ENCODE measurements at regions of chr3 and their contacts with region 1.

Region 1: DNA sequence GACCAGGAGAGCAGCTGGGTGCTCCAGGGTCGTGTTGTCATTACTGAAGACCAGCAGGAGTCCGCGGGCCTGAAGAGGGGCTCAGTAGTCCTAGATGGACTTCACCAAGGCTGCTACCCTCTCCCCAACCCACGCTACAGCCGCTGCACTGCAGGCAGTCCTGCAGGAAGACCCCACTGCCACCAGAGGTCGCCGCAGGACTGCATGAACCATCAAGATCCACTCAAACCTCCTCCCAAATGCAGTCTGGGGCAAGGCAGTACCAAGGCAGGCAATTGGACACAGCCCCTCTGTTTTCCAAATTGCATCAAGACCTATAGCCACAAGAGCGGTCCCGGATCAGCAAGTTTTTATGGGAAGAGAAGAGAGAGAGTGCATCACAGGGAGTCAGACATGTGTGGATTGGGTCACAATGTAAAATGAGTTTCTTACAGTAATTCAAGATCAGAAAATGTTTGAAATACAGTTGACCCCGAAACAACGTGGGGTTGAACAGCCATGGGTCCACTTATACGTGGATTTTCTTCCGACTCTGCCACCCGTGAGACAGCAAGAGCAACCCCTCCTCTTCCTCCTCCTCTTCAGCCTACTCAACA is 46.7 kb downstream of the DZIP1L start:
- DNase-seq: peak; percentile 86
- CTCF ChIP-seq: peak; percentile 98

Region 2: DNA sequence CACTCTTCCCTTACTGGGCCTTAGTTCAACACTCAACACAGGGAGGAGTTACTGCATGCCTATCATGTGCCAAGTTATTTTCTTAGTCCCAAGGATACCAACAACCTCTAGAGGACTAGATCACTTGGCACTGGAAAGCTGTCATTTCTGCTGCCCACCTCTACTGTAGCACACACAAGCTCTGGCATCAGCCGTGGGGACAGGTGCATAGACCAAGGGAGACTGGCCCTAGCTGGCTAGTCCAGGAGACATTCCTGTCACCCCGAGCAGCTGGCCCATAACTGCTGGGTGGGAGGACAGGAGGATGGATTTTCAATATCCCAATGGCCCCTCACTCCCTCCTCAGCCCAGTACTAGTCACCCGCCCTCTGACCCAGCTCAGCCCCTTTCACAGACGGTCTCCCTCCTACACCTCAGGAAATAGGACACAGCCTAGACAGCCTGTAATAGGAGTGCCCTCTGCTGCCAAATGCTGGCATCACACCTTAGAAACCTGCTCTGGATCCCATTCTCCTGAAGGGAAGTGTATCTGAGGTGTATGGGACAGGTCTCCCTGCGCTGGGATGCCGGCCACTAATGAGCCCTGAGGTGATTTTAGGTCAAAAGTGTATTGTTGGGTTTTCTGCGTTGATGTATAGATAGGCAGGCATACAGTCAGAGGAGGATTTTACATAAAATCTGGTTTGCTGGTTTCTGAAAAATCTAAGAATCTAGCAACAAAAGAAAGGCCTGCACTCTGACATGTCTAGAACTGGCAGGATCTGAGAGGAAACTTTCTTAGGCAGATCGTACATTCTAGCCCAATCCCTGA is 50.1 kb after region 1 on chr3:
- in situ Hi-C with region 1: loop called (anchors 5 kb)
- DNase-seq: peak; percentile 68
- CTCF ChIP-seq: peak; percentile 67

Measured in GM13976 (cell line).